HCT116 (cell line): ENCODE measurements at regions of chr7 and their contacts with region 1.

Region 1: GRCh38 chr7:115087437-115087836 is 165.5 kb downstream of the MDFIC start:
- DNase-seq: peak; percentile 29
- ATAC-seq: peak; percentile 63
- H3K4me3 ChIP-seq: no peak overlapping the region
- H3K27ac ChIP-seq: no peak overlapping the region
- H3K4me1 ChIP-seq: peaks cover 7 to 11% of the 10 kb centered on the region in 2 experiments; a peak in 3 of 4 replicates
- H3K27me3 ChIP-seq: no peaks in the 10 kb centered on the region
- CTCF ChIP-seq: no peak
- POLR2A ChIP-seq: no peak
- RAD21 ChIP-seq: no peak

Region 2: GRCh38 chr7:114916261-114916892 is 171.1 kb before region 1 on chr7:
- CTCF ChIA-PET with region 1: no interaction called
- POLR2A ChIA-PET with region 1: no interaction called
- RAD21 ChIA-PET with region 1: no interaction called
- intact Hi-C with region 1: no loop called
- DNase-seq: no peak
- ATAC-seq: no peak
- H3K4me3 ChIP-seq: no peak overlapping the region
- H3K27ac ChIP-seq: no peak overlapping the region
- H3K4me1 ChIP-seq: no peaks in the 10 kb centered on the region
- H3K27me3 ChIP-seq: no peaks in the 10 kb centered on the region
- CTCF ChIP-seq: no peak
- POLR2A ChIP-seq: no peak
- RAD21 ChIP-seq: no peak

Region 3: DNA sequence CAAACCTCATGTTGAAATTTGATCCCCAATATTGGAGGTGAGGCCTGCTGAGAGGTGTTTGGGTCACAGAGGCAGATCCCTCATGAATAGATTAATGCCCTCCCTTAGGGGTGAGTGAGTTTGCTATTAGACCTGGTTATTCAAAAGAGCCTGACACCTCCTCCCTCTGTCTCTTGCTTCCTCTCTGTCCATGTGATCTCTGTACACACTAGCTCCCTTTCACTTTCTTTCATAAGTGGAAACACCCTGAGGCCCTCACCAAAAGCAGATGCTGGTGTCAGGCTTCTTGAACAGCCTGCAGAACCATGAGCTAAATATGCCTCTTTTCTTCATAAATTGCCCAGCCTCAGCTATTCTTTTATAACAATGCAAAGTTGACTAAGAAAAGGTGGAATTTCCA is 281.6 kb after region 1 on chr7:
- CTCF ChIA-PET with region 1: no interaction called
- POLR2A ChIA-PET with region 1: no interaction called
- RAD21 ChIA-PET with region 1: no interaction called
- intact Hi-C with region 1: no loop called
- DNase-seq: no peak
- ATAC-seq: no peak
- H3K4me3 ChIP-seq: no peak overlapping the region
- H3K27ac ChIP-seq: no peak overlapping the region
- H3K4me1 ChIP-seq: no peaks in the 10 kb centered on the region
- H3K27me3 ChIP-seq: no peaks in the 10 kb centered on the region
- CTCF ChIP-seq: no peak
- POLR2A ChIP-seq: no peak
- RAD21 ChIP-seq: no peak

Region 4: GRCh38 chr7:115707258-115708012 is 620.0 kb after region 1 on chr7:
- CTCF ChIA-PET with region 1: no interaction called
- POLR2A ChIA-PET with region 1: no interaction called
- RAD21 ChIA-PET with region 1: interaction called in 1 of 2 experiments, 3 read pairs
- intact Hi-C with region 1: loop called (anchors 10 kb)
- DNase-seq: peak; percentile 66
- ATAC-seq: peak; percentile 94
- H3K4me3 ChIP-seq: no peak overlapping the region
- H3K27ac ChIP-seq: no peak overlapping the region
- H3K4me1 ChIP-seq: no peaks in the 10 kb centered on the region
- H3K27me3 ChIP-seq: no peaks in the 10 kb centered on the region
- CTCF ChIP-seq: peak; percentile 34 to 68 (median 66); a peak in 4 of 6 replicates
- POLR2A ChIP-seq: no peak
- RAD21 ChIP-seq: peak; percentile 79